Activated naive CD4-positive, alpha-beta T cell treated with anti-CD3 and anti-CD28 coated beads for 36 hours (primary cell): ENCODE measurements at regions of chr5 and their contacts with region 1.

Region 1: DNA sequence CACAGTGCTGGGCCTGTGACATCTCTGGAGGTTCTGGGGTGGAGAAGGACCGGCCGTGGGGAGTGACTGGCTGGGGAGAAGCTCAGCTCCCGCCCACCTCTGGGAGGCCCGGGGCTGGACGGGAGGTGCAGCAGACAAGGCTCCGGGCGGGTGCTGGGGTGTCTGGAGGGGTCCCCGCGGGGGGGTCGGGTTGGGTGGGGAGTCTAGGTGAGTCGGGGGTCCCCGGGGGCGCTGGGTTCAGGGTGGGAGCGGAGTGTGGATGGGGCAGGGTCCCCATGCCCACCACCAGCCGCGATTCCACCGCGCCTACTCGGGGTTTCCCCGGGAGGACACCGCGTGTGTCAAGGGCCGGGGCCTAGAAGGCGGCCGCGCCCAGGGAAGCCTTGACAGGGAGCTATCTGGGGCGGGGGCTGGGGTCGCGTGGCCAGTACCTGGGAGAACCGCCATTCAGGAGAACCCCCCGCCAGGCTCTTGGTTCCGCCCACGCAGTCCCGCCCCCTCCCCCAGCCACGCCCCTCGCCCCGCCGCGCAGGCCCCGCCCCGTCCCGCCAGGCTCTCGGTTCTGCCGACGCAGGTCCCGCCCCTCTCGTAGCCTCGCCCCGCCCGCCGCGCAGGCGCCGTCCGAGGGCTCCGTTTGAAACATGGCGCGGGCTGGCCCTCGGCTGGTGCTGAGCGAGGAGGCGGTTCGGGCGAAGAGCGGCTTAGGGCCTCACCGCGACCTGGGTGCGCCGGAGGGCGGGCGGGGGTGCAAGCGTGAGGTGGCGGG is at the start of gene CEP72:
- DNase-seq: peak; percentile 94
- H3K4me3 Mint-ChIP-seq: peak within 1 kb of the TSS; percentile 93
- H3K27ac Mint-ChIP-seq: peak within 1 kb of the TSS; percentile 74
- H3K4me1 Mint-ChIP-seq: peaks cover 51% of the 10 kb centered on the region
- H3K27me3 Mint-ChIP-seq: peaks cover 8% of the 10 kb centered on the region
- total RNA-seq, gene CEP72: 18.3 to 18.8 TPM

Region 2: GRCh38 chr5:102411-103043 is 509.4 kb before region 1 on chr5:
- CTCF ChIA-PET with region 1: no interaction called
- intact Hi-C with region 1: no loop called
- DNase-seq: no peak
- H3K4me3 Mint-ChIP-seq: no peak overlapping the region
- H3K27ac Mint-ChIP-seq: no peak overlapping the region
- H3K4me1 Mint-ChIP-seq: no peaks in the 10 kb centered on the region
- H3K27me3 Mint-ChIP-seq: peaks cover 25% of the 10 kb centered on the region

Region 3: GRCh38 chr5:776792-777711 is 165.1 kb after region 1 on chr5:
- CTCF ChIA-PET with region 1: no interaction called
- intact Hi-C with region 1: loop called (anchors 5 kb)
- DNase-seq: no peak
- H3K4me3 Mint-ChIP-seq: no peak overlapping the region
- H3K27ac Mint-ChIP-seq: no peak overlapping the region
- H3K4me1 Mint-ChIP-seq: no peaks in the 10 kb centered on the region
- H3K27me3 Mint-ChIP-seq: no peaks in the 10 kb centered on the region